Panc1 (cell line): ENCODE measurements at regions of chr7 and their contacts with region 1.

Region 1: DNA sequence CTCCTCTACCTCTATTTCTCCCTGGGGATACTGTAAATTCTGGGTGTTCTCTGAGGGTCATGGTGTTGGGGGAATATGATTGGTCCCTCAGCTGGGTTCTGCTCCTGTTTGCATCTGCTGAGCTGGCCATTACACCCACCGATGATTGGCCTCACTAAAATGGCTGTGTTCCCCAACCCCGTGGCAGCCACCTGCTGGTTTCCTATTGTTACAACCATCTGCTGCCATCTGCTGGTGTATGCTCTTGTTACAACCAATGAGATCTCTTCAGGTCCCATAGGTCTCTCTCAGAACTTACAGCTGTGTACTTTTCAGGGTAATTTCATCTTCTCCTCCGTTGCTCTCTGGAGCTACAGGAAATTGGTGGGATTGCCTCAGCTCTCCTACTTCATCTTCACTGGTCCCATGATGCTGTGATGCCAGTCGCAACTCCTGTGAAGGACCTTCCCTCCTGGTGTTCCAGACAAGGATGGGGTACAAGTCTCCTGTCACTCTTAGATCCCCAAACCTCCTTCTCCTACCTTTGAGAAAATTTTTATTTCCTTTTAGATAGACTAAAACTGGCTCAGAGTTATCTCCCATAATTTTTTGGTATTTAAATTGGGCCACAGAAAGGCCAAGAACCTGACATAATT is 303.5 kb upstream of the SMIM30 start:
- DNase-seq: peak; percentile 67
- ATAC-seq: peak; percentile 96
- H3K4me3 ChIP-seq: no peak overlapping the region
- H3K27ac ChIP-seq: no peak overlapping the region
- H3K4me1 ChIP-seq: no peaks in the 10 kb centered on the region
- H3K27me3 ChIP-seq: no peaks in the 10 kb centered on the region
- CTCF ChIP-seq: peak; percentile 83

Region 2: GRCh38 chr7:112550468-112551060 is 871.2 kb before region 1 on chr7:
- CTCF ChIA-PET with region 1: interaction called, 3 read pairs
- POLR2A ChIA-PET with region 1: no interaction called
- in situ Hi-C with region 1: no loop called
- intact Hi-C with region 1: loop called (anchors 5 kb)
- DNase-seq: peak; percentile 72
- ATAC-seq: peak; percentile 85
- H3K4me3 ChIP-seq: no peak overlapping the region
- H3K27ac ChIP-seq: no peak overlapping the region
- H3K4me1 ChIP-seq: no peaks in the 10 kb centered on the region
- H3K27me3 ChIP-seq: no peaks in the 10 kb centered on the region
- CTCF ChIP-seq: peak; percentile 88

Region 3: GRCh38 chr7:113015032-113015645 is 406.7 kb before region 1 on chr7:
- CTCF ChIA-PET with region 1: interaction called, 4 read pairs
- POLR2A ChIA-PET with region 1: no interaction called
- in situ Hi-C with region 1: no loop called
- intact Hi-C with region 1: loop called (anchors 2 kb)
- DNase-seq: no peak
- ATAC-seq: no peak
- H3K4me3 ChIP-seq: no peak overlapping the region
- H3K27ac ChIP-seq: no peak overlapping the region
- H3K4me1 ChIP-seq: no peaks in the 10 kb centered on the region; the same call in 1 of the 2 replicates
- H3K27me3 ChIP-seq: no peaks in the 10 kb centered on the region
- CTCF ChIP-seq: peak; percentile 43; the same call in 1 of the 2 replicates

Region 4: DNA sequence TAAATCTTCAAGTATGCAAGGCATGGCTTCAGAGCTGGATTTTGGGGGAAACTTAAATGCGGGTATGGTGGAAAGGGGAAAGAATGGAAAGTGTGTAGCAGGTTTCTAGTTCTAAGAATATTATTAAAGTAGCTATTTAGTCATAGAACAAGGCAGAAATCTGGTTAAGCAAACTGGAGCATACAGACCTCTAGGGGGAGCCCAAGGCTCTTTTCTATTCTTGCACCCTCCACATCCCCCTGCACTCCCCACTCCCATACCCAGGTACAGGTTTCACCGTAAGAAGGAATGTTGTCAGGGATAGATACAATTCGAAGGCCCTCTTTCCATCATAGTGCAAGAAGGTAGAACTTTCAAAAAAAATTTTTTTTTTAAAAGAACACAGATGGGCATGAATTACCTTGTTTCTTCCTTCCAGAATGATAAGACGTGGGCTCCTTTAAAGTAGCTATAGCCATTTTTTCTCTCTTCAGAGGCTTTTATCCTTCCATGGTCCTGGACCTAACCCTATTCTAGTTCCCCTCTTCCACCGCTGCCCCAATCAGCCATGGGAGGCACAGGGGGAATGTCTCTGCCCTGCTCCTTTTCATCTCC is 262.0 kb before region 1 on chr7:
- CTCF ChIA-PET with region 1: interaction called, 4 read pairs
- POLR2A ChIA-PET with region 1: no interaction called
- in situ Hi-C with region 1: no loop called
- intact Hi-C with region 1: loop called (anchors 1 kb)
- DNase-seq: peak; percentile 18
- ATAC-seq: no peak
- H3K4me3 ChIP-seq: no peak overlapping the region
- H3K27ac ChIP-seq: no peak overlapping the region
- H3K4me1 ChIP-seq: no peaks in the 10 kb centered on the region
- H3K27me3 ChIP-seq: no peaks in the 10 kb centered on the region; the same call in 1 of the 2 replicates
- CTCF ChIP-seq: peak; percentile 76

Region 5: GRCh38 chr7:113698556-113699220 is 276.9 kb after region 1 on chr7:
- CTCF ChIA-PET with region 1: no interaction called
- POLR2A ChIA-PET with region 1: no interaction called
- in situ Hi-C with region 1: no loop called
- intact Hi-C with region 1: loop called (anchors 10 kb)
- DNase-seq: peak; percentile 20
- ATAC-seq: no peak
- H3K4me3 ChIP-seq: no peak overlapping the region
- H3K27ac ChIP-seq: no peak overlapping the region
- H3K4me1 ChIP-seq: no peaks in the 10 kb centered on the region
- H3K27me3 ChIP-seq: no peaks in the 10 kb centered on the region
- CTCF ChIP-seq: peak; percentile 76; the same call in 1 of the 2 replicates